Endothelial cell of umbilical vein (primary cell): ENCODE measurements at regions of chr5 and their contacts with region 1.

Region 1: GRCh38 chr5:90783460-90784333 is 225.1 kb downstream of the ADGRV1 start:
- DNase-seq: peak; percentile 68
- H3K4me3 ChIP-seq: no peak overlapping the region
- H3K27ac ChIP-seq: no peak overlapping the region
- H3K4me1 ChIP-seq: no peaks in the 10 kb centered on the region
- H3K27me3 ChIP-seq: peaks cover 0 to 2% of the 10 kb centered on the region in 2 experiments
- CTCF ChIP-seq: peak; percentile 67 to 79
- POLR2A ChIP-seq: no peak

Region 2: DNA sequence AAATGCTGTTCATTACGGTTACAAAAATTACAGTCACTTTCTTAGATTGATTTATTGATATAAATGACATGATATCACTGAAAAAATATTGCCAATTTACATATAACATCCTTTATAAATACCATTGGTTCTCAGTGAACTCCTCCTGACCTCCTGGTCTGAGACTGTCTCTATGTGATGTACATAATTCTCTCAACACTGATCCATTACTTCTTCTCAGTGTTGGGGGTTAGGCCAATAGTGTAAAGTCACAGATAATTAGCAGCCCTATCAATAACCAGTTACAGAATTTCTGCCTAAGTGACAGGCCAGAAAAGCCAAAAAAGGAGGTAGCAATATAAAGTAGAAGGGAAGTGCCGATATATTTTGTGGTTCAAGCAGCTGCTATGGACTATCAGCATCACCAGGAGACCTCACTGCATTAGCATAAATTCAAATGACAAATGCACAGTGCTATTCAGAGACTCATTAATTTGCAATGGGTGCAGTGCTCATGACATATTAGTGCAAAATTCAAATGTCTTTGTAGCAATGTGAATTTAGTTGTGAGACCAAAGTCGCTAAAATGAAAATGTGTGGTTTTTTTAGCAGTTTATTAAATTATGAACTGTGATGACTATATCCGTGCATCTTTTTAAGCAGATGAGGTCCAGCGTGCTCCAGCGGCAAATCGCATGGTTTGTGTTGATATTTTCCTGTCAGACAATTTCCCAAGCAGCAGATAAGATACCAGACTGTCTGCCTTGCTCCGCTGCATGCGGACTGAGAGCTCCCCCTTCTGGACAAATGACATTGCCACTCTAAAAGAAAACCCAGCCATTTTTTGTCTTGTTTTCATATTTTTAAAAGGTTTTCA is 518.8 kb before region 1 on chr5:
- CTCF ChIA-PET with region 1: interaction called, 7 read pairs
- POLR2A ChIA-PET with region 1: no interaction called
- dilution Hi-C with region 1: no loop called
- intact Hi-C with region 1: loop called (anchors 5 kb)
- DNase-seq: peak; percentile 72
- H3K4me3 ChIP-seq: no peak overlapping the region
- H3K27ac ChIP-seq: no peak overlapping the region
- H3K4me1 ChIP-seq: no peaks in the 10 kb centered on the region
- H3K27me3 ChIP-seq: no peaks in the 10 kb centered on the region
- CTCF ChIP-seq: peak; percentile 84 to 90
- POLR2A ChIP-seq: no peak

Region 3: GRCh38 chr5:90434116-90434714 is 349.5 kb before region 1 on chr5:
- CTCF ChIA-PET with region 1: interaction called, 67 read pairs
- POLR2A ChIA-PET with region 1: no interaction called
- dilution Hi-C with region 1: no loop called
- intact Hi-C with region 1: loop called (anchors 1 kb)
- DNase-seq: peak; percentile 41
- H3K4me3 ChIP-seq: no peak overlapping the region
- H3K27ac ChIP-seq: no peak overlapping the region
- H3K4me1 ChIP-seq: no peaks in the 10 kb centered on the region
- H3K27me3 ChIP-seq: peaks cover 8 to 9% of the 10 kb centered on the region in 2 experiments
- CTCF ChIP-seq: peak; percentile 54 to 64
- POLR2A ChIP-seq: no peak

Region 4: DNA sequence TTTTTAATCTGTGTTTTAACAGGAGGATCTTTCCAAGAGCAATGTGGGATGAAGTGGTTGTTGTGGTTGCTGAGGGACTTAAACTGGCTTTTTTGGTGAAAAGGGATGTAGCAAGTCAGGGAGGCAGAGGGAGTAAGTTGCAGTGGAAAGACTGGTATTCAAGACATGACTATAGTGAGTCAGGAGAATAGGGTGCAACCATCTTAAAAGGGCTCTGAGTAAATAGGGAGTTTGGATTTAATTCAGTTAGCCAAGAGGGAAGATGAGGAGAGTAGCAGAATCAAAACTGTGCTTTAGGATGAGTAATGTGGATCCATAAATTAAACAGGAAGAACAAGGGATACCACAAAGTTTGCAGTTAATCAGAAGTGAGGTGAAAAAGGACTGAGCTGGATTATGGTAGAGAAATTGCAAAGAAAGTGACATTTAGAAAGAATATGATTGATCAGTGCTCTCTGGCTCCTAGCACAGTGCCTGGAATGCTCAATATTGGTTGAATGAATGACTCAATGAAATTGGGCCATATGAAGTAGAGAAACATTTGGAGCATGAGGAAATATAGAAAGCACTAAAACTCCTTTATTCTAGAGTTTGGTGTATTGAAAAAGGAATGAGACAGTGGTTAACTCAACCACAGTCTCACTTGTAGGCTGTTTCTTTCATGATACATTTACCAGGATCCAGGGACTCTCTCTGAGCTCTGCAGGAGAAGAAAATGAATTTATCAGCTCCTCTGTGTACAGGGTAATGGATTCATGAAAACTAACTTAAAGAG is 303.9 kb before region 1 on chr5:
- CTCF ChIA-PET with region 1: no interaction called
- POLR2A ChIA-PET with region 1: no interaction called
- dilution Hi-C with region 1: no loop called
- intact Hi-C with region 1: no loop called
- DNase-seq: no peak
- H3K4me3 ChIP-seq: no peak overlapping the region
- H3K27ac ChIP-seq: no peak overlapping the region
- H3K4me1 ChIP-seq: peaks cover 6% of the 10 kb centered on the region
- H3K27me3 ChIP-seq: no peaks in the 10 kb centered on the region
- CTCF ChIP-seq: no peak
- POLR2A ChIP-seq: no peak

Region 5: DNA sequence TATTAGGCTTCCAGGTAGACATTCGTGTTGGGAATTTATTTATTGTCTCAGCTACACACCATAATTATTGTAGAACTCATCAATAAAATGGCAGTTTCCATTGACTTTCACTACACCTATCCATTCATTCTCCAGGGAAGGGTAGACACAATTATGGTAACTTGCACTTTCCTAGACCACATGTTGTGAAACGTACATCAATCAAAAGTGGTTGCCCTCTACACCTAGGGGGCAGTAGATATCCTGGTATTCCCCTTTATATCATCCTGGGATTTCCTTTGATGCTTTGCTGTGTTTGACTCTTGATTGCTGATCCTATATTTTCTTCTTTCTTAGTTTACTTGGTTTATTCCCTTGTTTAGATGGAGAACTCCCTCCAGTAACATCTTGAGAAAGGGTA is 177.2 kb before region 1 on chr5:
- CTCF ChIA-PET with region 1: interaction called, 5 read pairs
- POLR2A ChIA-PET with region 1: no interaction called
- dilution Hi-C with region 1: no loop called
- intact Hi-C with region 1: loop called (anchors 1 kb)
- DNase-seq: no peak
- H3K4me3 ChIP-seq: no peak overlapping the region
- H3K27ac ChIP-seq: no peak overlapping the region
- H3K4me1 ChIP-seq: no peaks in the 10 kb centered on the region
- H3K27me3 ChIP-seq: no peaks in the 10 kb centered on the region
- CTCF ChIP-seq: no peak
- POLR2A ChIP-seq: no peak

Region 6: DNA sequence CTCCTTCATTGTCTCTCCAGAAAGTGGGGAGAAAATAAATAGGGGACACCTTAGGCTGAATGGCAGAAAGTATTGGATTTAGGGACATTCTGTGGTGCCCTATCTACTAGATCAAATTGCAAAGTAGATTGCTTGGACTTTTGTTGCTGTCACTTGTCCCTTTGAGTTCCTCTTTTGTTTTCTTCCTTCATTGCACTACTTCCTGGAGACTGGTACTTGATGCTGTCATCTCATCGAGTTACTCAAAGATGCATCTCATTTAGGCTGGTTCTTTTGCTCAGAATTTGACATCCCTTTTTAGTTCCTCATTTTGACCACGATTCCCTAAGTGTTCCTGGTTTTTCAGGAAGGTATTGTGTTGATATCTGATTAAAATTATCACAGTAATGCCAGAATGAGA is 87.5 kb before region 1 on chr5:
- CTCF ChIA-PET with region 1: no interaction called
- POLR2A ChIA-PET with region 1: no interaction called
- dilution Hi-C with region 1: no loop called
- intact Hi-C with region 1: no loop called
- DNase-seq: no peak
- H3K4me3 ChIP-seq: no peak overlapping the region
- H3K27ac ChIP-seq: no peak overlapping the region
- H3K4me1 ChIP-seq: no peaks in the 10 kb centered on the region
- H3K27me3 ChIP-seq: peaks cover 0 to 2% of the 10 kb centered on the region in 2 experiments
- CTCF ChIP-seq: no peak
- POLR2A ChIP-seq: no peak

Region 7: GRCh38 chr5:90802474-90803317 is 19.0 kb after region 1 on chr5:
- CTCF ChIA-PET with region 1: interaction called, 13 read pairs
- POLR2A ChIA-PET with region 1: no interaction called
- dilution Hi-C with region 1: no loop called
- intact Hi-C with region 1: no loop called
- DNase-seq: peak; percentile 55
- H3K4me3 ChIP-seq: no peak overlapping the region
- H3K27ac ChIP-seq: no peak overlapping the region
- H3K4me1 ChIP-seq: no peaks in the 10 kb centered on the region
- H3K27me3 ChIP-seq: peaks cover 0 to 4% of the 10 kb centered on the region in 2 experiments
- CTCF ChIP-seq: peak; percentile 66 to 71
- POLR2A ChIP-seq: no peak